Activated B cell treated with CpG ODN at 0.5 μM for 24 hours (primary cell): ENCODE measurements at regions of chr19 and their contacts with region 1.

Region 1: DNA sequence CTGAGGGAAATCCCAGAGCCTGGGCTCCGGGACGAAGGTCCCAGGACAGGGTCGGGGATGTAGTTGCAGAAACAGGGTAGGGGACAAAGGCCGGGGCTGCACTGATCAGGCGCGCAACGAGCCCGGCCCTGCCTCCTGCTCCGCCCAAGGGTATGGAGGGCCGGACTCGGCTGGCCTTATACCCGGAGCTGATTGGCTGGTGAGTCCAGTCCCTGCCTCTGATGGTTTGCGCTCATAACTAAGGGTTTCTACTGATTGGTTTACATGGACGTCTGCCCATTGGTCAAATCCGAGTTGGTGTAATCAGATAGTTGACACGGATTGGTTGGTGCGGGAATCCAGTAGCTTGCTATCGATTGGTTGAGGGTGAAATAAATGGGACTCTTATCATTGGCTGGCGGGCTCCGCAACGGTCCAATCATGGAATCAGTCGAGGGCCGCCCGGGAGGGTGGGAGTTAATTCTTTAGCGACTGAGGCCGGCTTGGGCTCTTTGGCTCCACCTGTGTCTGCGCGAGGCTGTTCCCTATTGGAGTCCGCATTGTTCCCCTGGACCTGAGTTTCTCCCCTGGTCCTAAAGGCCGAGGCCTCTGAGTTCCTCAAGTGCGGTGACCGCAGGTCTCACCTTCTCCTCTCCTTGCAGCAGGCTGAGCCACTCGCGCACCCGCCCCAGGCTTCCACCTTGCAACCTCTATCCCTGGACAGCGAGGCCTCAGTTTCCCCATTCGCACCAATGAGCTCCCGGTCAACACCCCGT is 570 bp upstream of the MPND start:
- DNase-seq: peak; percentile 75
- ATAC-seq: peak; percentile 85
- H3K4me3 Mint-ChIP-seq: peak overlapping the region; percentile 91
- H3K27ac Mint-ChIP-seq: peak overlapping the region; percentile 82
- H3K4me1 Mint-ChIP-seq: peaks cover 35% of the 10 kb centered on the region
- H3K27me3 Mint-ChIP-seq: no peaks in the 10 kb centered on the region
- CTCF ChIP-seq: no peak

Region 2: DNA sequence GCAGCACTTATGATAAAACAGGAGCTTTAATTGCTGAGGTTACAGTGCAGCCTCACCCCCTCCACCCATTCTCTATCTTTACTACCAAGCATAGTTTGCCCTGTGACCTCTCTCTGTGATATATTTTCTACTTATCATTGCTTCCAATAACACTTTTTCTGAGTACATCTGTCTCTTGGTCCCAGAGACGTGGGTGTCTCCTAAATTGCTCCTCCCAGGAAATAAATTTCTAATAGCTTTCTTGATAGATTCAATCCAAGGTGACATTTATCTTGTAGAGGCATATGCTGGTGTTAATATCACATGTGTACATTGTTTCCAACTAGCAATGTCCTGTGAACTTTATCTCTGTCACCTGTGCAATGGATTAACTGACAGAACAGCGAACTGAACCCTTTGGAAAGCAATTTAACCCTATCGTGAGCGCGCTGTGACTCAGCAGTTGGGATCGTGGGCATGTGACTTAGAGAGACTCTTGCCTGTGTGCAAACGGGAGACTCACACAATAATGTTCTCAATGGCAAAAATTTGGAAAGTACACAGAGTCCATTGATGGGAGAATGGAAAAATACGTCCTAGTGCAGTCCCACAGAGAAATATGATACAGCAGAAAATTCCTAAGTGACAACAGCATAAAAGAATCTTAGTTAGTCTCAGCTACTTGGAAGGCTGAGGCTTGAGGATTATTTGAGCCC is 211.9 kb before region 1 on chr19:
- CTCF ChIA-PET with region 1: no interaction called
- POLR2A ChIA-PET with region 1: no interaction called
- intact Hi-C with region 1: no loop called
- DNase-seq: no peak
- ATAC-seq: no peak
- H3K4me3 Mint-ChIP-seq: no peak overlapping the region
- H3K27ac Mint-ChIP-seq: no peak overlapping the region
- H3K4me1 Mint-ChIP-seq: no peaks in the 10 kb centered on the region
- H3K27me3 Mint-ChIP-seq: peaks cover 3% of the 10 kb centered on the region
- CTCF ChIP-seq: no peak

Region 3: GRCh38 chr19:4328243-4328990 is 14.4 kb before region 1 on chr19:
- CTCF ChIA-PET with region 1: no interaction called
- POLR2A ChIA-PET with region 1: interaction called, 17 read pairs
- intact Hi-C with region 1: loop called (anchors 1 kb)
- DNase-seq: peak; percentile 81
- ATAC-seq: peak; percentile 90
- H3K4me3 Mint-ChIP-seq: peak overlapping the region; percentile 81
- H3K27ac Mint-ChIP-seq: peak overlapping the region; percentile 82
- H3K4me1 Mint-ChIP-seq: peaks cover 26% of the 10 kb centered on the region
- H3K27me3 Mint-ChIP-seq: no peaks in the 10 kb centered on the region
- CTCF ChIP-seq: no peak

Region 4: DNA sequence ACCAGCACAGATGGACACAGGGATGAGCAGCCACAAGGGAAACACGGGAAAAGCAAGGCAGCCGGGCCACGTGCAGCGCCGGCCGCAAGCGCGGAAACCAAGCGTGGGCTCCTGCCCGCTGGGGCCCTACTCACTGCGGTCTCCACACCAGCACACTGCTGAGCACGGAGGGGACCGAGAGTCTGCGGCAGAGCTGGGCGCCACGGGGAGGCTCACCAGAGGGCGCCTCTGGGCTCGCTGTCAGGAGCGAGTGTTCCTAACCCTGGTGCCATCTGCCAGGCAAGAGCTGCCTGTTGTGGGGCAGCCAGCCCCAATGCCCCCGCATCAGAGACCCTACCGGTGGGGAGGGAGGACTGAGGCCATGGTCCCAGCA is 27.1 kb after region 1 on chr19:
- CTCF ChIA-PET with region 1: interaction called, 3 read pairs
- POLR2A ChIA-PET with region 1: interaction called, 10 read pairs
- intact Hi-C with region 1: loop called (anchors 1 kb)
- DNase-seq: peak; percentile 51
- ATAC-seq: peak; percentile 49
- H3K4me3 Mint-ChIP-seq: peak overlapping the region; percentile 78
- H3K27ac Mint-ChIP-seq: peak overlapping the region; percentile 92
- H3K4me1 Mint-ChIP-seq: peaks cover 70% of the 10 kb centered on the region
- H3K27me3 Mint-ChIP-seq: no peaks in the 10 kb centered on the region
- CTCF ChIP-seq: no peak